Activated B cell treated with CpG ODN at 0.5 μM for 24 hours (primary cell): ENCODE measurements at regions of chr12 and their contacts with region 1.

Region 1: GRCh38 chr12:14578646-14579045 is 11.0 kb upstream of the PLBD1 start:
- DNase-seq: no peak
- ATAC-seq: peak; percentile 58
- H3K4me3 Mint-ChIP-seq: no peak overlapping the region
- H3K27ac Mint-ChIP-seq: no peak overlapping the region
- H3K4me1 Mint-ChIP-seq: peaks cover 23% of the 10 kb centered on the region
- H3K27me3 Mint-ChIP-seq: no peaks in the 10 kb centered on the region
- CTCF ChIP-seq: no peak

Region 2: DNA sequence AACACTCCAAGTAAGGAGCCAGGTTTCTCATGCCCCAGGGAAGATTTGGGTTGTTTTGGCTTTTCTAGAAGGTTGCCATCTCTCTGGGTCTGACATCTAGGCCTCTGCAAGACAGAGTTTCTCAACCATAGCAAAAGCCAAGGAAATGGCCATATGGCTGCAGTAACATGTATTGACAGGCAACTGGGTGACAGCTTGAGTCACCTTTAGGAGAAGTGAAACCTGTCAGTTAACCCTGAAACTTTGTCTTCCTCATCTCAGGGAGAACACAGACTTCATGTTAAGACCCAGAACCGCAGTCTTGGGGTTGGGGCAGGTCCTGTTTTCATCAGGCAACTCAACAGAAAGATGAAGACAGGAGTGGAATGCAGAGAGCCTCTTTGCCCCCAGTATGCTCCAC is 35.1 kb after region 1 on chr12:
- CTCF ChIA-PET with region 1: no interaction called
- POLR2A ChIA-PET with region 1: no interaction called
- intact Hi-C with region 1: loop called (anchors 2 kb)
- DNase-seq: peak; percentile 34
- ATAC-seq: peak; percentile 86
- H3K4me3 Mint-ChIP-seq: peak overlapping the region; percentile 60
- H3K27ac Mint-ChIP-seq: peak overlapping the region; percentile 93
- H3K4me1 Mint-ChIP-seq: peaks cover 38% of the 10 kb centered on the region
- H3K27me3 Mint-ChIP-seq: no peaks in the 10 kb centered on the region
- CTCF ChIP-seq: no peak

Region 3: GRCh38 chr12:14803011-14803829 is 224.6 kb after region 1 on chr12 and contains the starts of genes C12orf60 and WBP11:
- CTCF ChIA-PET with region 1: no interaction called
- POLR2A ChIA-PET with region 1: no interaction called
- intact Hi-C with region 1: no loop called
- DNase-seq: peak; percentile 74
- ATAC-seq: peak; percentile 95
- H3K4me3 Mint-ChIP-seq: no peak within 1 kb of the TSS
- H3K27ac Mint-ChIP-seq: no peak within 1 kb of the TSS
- H3K4me1 Mint-ChIP-seq: peaks cover 17% of the 10 kb centered on the region
- H3K27me3 Mint-ChIP-seq: no peaks in the 10 kb centered on the region
- CTCF ChIP-seq: no peak
- total RNA-seq, gene C12orf60: 0.64 and 0.69 TPM in 2 replicates
- total RNA-seq, gene WBP11: 86.3 and 89.4 TPM in 2 replicates